Dendritic cell treated with granulocyte-macrophage colony-stimulating factor and Interleukin-4, amounts not matched to agents 40 ng/mL and 50 ng/mL, for 4 days (primary cell): ENCODE measurements at regions of chr17 and their contacts with region 1.

Region 1: GRCh38 chr17:8409966-8410864 is 12.6 kb upstream of the RNF222 start:
- H3K4me3 Mint-ChIP-seq: peak overlapping the region; percentile 49
- H3K27ac Mint-ChIP-seq: no peak overlapping the region
- H3K4me1 Mint-ChIP-seq: peaks cover 28% of the 10 kb centered on the region
- H3K27me3 Mint-ChIP-seq: peaks cover 7% of the 10 kb centered on the region

Region 2: GRCh38 chr17:8435245-8436168 is 25.3 kb after region 1 on chr17 and contains the start of gene NDEL1:
- intact Hi-C with region 1: loop called (anchors 2 kb)
- H3K4me3 Mint-ChIP-seq: peak within 1 kb of the TSS; percentile 93
- H3K27ac Mint-ChIP-seq: peak within 1 kb of the TSS; percentile 94
- H3K4me1 Mint-ChIP-seq: peaks cover 14% of the 10 kb centered on the region
- H3K27me3 Mint-ChIP-seq: no peaks in the 10 kb centered on the region

Region 3: DNA sequence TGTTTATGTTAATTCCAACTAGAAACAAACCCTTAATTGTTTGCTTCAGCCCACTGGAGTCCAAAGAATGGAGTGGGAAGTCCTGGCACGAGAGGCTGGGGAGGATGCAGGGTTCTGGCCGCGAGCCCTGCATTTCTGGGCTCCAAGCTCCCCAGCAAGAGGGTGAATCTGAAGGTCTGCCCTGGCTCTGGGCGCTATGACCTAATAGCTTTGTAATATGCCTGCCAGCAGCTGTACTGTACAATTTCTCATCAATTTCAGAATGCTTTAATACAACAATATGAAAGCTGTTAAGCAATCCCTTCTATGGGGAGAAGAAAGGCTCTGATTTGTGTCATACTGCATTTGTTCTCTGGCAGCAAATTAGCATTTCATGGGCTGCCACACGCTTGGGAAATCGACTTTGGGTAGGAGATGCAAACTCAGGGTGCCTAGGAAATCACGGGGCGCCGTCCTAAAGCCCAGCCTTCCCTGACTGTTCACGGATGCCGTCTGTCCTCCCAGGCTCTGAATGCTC is 69.3 kb after region 1 on chr17:
- intact Hi-C with region 1: no loop called
- H3K4me3 Mint-ChIP-seq: no peak overlapping the region
- H3K27ac Mint-ChIP-seq: no peak overlapping the region
- H3K4me1 Mint-ChIP-seq: no peaks in the 10 kb centered on the region
- H3K27me3 Mint-ChIP-seq: no peaks in the 10 kb centered on the region

Region 4: GRCh38 chr17:8745586-8746500 is 335.6 kb after region 1 on chr17:
- intact Hi-C with region 1: loop called (anchors 1 kb)
- H3K4me3 Mint-ChIP-seq: peak overlapping the region; percentile 95
- H3K27ac Mint-ChIP-seq: peak overlapping the region; percentile 87
- H3K4me1 Mint-ChIP-seq: peaks cover 17% of the 10 kb centered on the region
- H3K27me3 Mint-ChIP-seq: peaks cover 35% of the 10 kb centered on the region

Region 5: GRCh38 chr17:8785547-8786413 is 375.6 kb after region 1 on chr17:
- intact Hi-C with region 1: loop called (anchors 2 kb)
- H3K4me3 Mint-ChIP-seq: no peak overlapping the region
- H3K27ac Mint-ChIP-seq: peak overlapping the region; percentile 22
- H3K4me1 Mint-ChIP-seq: peaks cover 28% of the 10 kb centered on the region
- H3K27me3 Mint-ChIP-seq: no peaks in the 10 kb centered on the region